ENCODE measurements at regions of chr11 and their contacts with region 1.

Region 1: GRCh38 chr11:8964324-8965320 is at the start of gene TMEM9B:
- DNase-seq: peak; percentile 50 to 87 (median 70)
- ATAC-seq: peak; percentile 72
- H3K4me3 ChIP-seq: peak within 1 kb of the TSS; percentile 98
- H3K4me3 Mint-ChIP-seq: peak within 1 kb of the TSS; percentile 97
- H3K27ac ChIP-seq: peak within 1 kb of the TSS; percentile 91 to 96
- H3K27ac Mint-ChIP-seq: peak within 1 kb of the TSS; percentile 97
- H3K4me1 ChIP-seq: peaks cover 28% of the 10 kb centered on the region
- H3K4me1 Mint-ChIP-seq: peaks cover 35% of the 10 kb centered on the region
- H3K27me3 ChIP-seq: no peaks in the 10 kb centered on the region
- H3K27me3 Mint-ChIP-seq: no peaks in the 10 kb centered on the region
- CTCF ChIP-seq: no peak
- total RNA-seq, gene TMEM9B: 20.5 to 22.1 TPM

Region 2: DNA sequence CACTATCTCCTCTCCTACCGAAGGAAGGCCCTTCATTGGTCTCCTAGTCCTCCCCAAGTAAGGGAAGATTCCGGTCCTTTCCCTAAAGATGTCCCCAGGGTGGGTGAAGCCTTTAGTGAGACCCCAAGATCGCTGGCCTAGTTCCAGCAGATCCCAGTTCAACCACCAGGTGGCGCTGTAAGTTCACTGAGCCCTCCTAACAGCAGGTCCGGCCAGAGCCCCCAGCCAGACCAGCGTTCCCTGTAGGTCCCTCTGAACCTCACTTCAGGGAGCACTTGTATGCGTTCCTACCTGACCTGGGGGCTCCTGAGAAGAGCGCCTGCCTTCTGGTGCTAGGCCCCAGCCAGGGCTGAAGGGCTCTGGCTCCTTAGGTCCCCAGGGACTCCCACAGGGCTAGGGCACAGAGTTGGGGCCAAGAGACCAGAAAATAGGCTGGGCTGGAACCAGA is 739.0 kb before region 1 on chr11:
- CTCF ChIA-PET with region 1: no interaction called
- POLR2A ChIA-PET with region 1: no interaction called
- intact Hi-C with region 1: loop called in 1 of 2 experiments (anchors 5 kb)
- DNase-seq: peak; percentile 44 to 76 (median 58)
- ATAC-seq: peak; percentile 37
- H3K4me3 ChIP-seq: no peak overlapping the region
- H3K4me3 Mint-ChIP-seq: no peak overlapping the region
- H3K27ac ChIP-seq: no peak overlapping the region
- H3K27ac Mint-ChIP-seq: no peak overlapping the region
- H3K4me1 ChIP-seq: no peaks in the 10 kb centered on the region
- H3K4me1 Mint-ChIP-seq: no peaks in the 10 kb centered on the region
- H3K27me3 ChIP-seq: no peaks in the 10 kb centered on the region
- H3K27me3 Mint-ChIP-seq: peaks cover 4% of the 10 kb centered on the region
- CTCF ChIP-seq: peak; percentile 91

Region 3: DNA sequence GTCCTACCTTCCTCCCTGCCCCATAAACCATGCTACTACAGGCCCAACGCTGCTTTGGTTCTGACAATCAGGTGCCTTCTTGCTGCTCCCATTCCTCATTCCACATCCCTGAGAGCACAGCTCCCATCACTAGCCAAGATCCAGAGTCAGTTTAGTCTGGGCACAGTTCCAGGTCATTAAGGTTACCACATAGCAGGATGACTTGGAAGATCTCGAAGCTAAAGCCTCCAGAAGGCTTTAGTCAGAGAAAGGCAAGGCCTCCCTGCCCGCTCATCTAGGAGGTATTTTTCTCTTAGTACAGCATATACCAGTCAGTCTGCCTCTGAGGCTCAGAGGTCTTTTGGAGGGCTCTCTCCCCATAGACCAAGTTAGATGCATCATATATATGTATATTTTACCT is 312.5 kb before region 1 on chr11:
- CTCF ChIA-PET with region 1: no interaction called
- POLR2A ChIA-PET with region 1: no interaction called
- intact Hi-C with region 1: no loop called
- DNase-seq: no peak
- ATAC-seq: no peak
- H3K4me3 ChIP-seq: no peak overlapping the region
- H3K4me3 Mint-ChIP-seq: no peak overlapping the region
- H3K27ac ChIP-seq: no peak overlapping the region
- H3K27ac Mint-ChIP-seq: no peak overlapping the region
- H3K4me1 ChIP-seq: no peaks in the 10 kb centered on the region
- H3K4me1 Mint-ChIP-seq: no peaks in the 10 kb centered on the region
- H3K27me3 ChIP-seq: no peaks in the 10 kb centered on the region
- H3K27me3 Mint-ChIP-seq: no peaks in the 10 kb centered on the region
- CTCF ChIP-seq: no peak

Region 4: GRCh38 chr11:8682303-8683114 is 282.1 kb before region 1 on chr11 and contains the starts of genes RPL27A and TRIM66:
- CTCF ChIA-PET with region 1: interaction called, 3 read pairs
- POLR2A ChIA-PET with region 1: interaction called, 18 read pairs
- intact Hi-C with region 1: loop called in 1 of 2 experiments (anchors 5 kb)
- DNase-seq: peak; percentile 97 to 100 (median 99)
- ATAC-seq: peak; percentile 94
- H3K4me3 ChIP-seq: peak within 1 kb of the TSS; percentile 93
- H3K4me3 Mint-ChIP-seq: peak within 1 kb of the TSS; percentile 99
- H3K27ac ChIP-seq: peak within 1 kb of the TSS; percentile 92 to 96
- H3K27ac Mint-ChIP-seq: peak within 1 kb of the TSS; percentile 99
- H3K4me1 ChIP-seq: peaks cover 29% of the 10 kb centered on the region
- H3K4me1 Mint-ChIP-seq: peaks cover 52% of the 10 kb centered on the region
- H3K27me3 ChIP-seq: no peaks in the 10 kb centered on the region
- H3K27me3 Mint-ChIP-seq: no peaks in the 10 kb centered on the region
- CTCF ChIP-seq: no peak
- total RNA-seq, gene RPL27A: 1,667 to 1,721 TPM
- total RNA-seq, gene TRIM66: 6.8 to 9.8 TPM

Region 5: GRCh38 chr11:8688414-8689362 is 275.9 kb before region 1 on chr11:
- CTCF ChIA-PET with region 1: interaction called, 3 read pairs
- POLR2A ChIA-PET with region 1: interaction called, 18 read pairs
- intact Hi-C with region 1: loop called in 1 of 2 experiments (anchors 5 kb)
- DNase-seq: peak; percentile 46 to 89 (median 77)
- ATAC-seq: peak; percentile 76
- H3K4me3 ChIP-seq: peak overlapping the region; percentile 73
- H3K4me3 Mint-ChIP-seq: peak overlapping the region; percentile 96
- H3K27ac ChIP-seq: peak overlapping the region; percentile 73 to 84
- H3K27ac Mint-ChIP-seq: peak overlapping the region; percentile 90
- H3K4me1 ChIP-seq: peaks cover 26% of the 10 kb centered on the region
- H3K4me1 Mint-ChIP-seq: peaks cover 43% of the 10 kb centered on the region
- H3K27me3 ChIP-seq: no peaks in the 10 kb centered on the region
- H3K27me3 Mint-ChIP-seq: no peaks in the 10 kb centered on the region
- CTCF ChIP-seq: no peak

Region 6: DNA sequence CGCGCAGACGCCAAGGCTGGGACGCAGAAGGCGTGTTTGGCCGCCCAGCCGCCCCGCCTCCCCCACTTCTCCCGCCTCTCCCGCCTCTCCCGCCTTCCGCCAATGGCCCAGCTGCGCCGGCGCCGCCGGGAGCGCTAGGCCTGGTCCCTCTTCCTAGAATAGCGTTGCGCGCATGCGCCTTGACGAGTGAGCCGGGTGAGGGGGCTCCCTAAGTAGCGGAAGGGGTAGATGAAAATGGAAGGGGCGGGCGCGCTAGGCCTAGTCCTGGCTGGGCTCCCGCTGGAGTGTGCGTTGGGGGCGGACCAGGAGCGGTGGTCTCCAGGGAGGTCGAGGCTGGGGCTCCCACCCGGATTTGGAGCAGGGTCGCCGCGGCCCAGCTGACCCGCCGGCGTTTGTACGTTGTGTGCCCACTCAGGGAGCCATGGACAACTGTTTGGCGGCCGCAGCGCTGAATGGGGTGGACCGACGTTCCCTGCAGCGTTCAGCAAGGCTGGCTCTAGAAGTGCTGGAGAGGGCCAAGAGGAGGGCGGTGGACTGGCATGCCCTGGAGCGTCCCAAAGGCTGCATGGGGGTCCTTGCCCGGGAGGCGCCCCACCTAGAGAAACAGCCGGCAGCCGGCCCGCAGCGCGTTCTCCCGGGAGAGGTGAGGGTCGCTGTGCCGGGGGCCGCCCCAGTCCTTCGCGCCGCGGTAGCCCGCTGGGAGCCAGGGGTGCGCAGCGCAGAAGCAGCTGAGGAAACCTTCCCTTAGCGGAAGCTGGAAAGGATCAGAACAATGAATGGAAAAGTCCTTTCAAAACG is 53.4 kb before region 1 on chr11 and contains the start of gene AKIP1:
- CTCF ChIA-PET with region 1: interaction called, 14 read pairs
- POLR2A ChIA-PET with region 1: interaction called, 9 read pairs
- intact Hi-C with region 1: loop called (anchors 1 to 2 kb)
- DNase-seq: peak; percentile 44 to 91 (median 74)
- ATAC-seq: peak; percentile 61
- H3K4me3 ChIP-seq: peak within 1 kb of the TSS; percentile 89
- H3K4me3 Mint-ChIP-seq: peak within 1 kb of the TSS; percentile 96
- H3K27ac ChIP-seq: peak within 1 kb of the TSS; percentile 41 to 55
- H3K27ac Mint-ChIP-seq: peak within 1 kb of the TSS; percentile 82
- H3K4me1 ChIP-seq: peaks cover 27% of the 10 kb centered on the region
- H3K4me1 Mint-ChIP-seq: peaks cover 47% of the 10 kb centered on the region
- H3K27me3 ChIP-seq: no peaks in the 10 kb centered on the region
- H3K27me3 Mint-ChIP-seq: no peaks in the 10 kb centered on the region
- CTCF ChIP-seq: no peak
- total RNA-seq, gene AKIP1: 3.2 to 4.1 TPM

Region 7: GRCh38 chr11:9003573-9004309 is 39.1 kb after region 1 on chr11 and contains the start of gene NRIP3:
- CTCF ChIA-PET with region 1: no interaction called
- POLR2A ChIA-PET with region 1: interaction called, 14 read pairs
- intact Hi-C with region 1: no loop called
- DNase-seq: peak; percentile 66 to 93 (median 76)
- ATAC-seq: peak; percentile 90
- H3K4me3 ChIP-seq: peak within 1 kb of the TSS; percentile 53
- H3K4me3 Mint-ChIP-seq: peak within 1 kb of the TSS; percentile 87
- H3K27ac ChIP-seq: no peak within 1 kb of the TSS
- H3K27ac Mint-ChIP-seq: peak within 1 kb of the TSS; percentile 25
- H3K4me1 ChIP-seq: peaks cover 23% of the 10 kb centered on the region
- H3K4me1 Mint-ChIP-seq: peaks cover 22% of the 10 kb centered on the region
- H3K27me3 ChIP-seq: peaks cover 11 to 40% of the 10 kb centered on the region in 2 experiments
- H3K27me3 Mint-ChIP-seq: peaks cover 51% of the 10 kb centered on the region
- CTCF ChIP-seq: no peak
- total RNA-seq, gene NRIP3: 4.6 to 4.9 TPM

Region 8: GRCh38 chr11:9384535-9385303 is 420.1 kb after region 1 on chr11 and contains the start of gene IPO7:
- CTCF ChIA-PET with region 1: interaction called, 3 read pairs
- POLR2A ChIA-PET with region 1: no interaction called
- intact Hi-C with region 1: loop called in 1 of 2 experiments (anchors 5 kb)
- DNase-seq: peak; percentile 72 to 93 (median 84)
- ATAC-seq: peak; percentile 98
- H3K4me3 ChIP-seq: peak within 1 kb of the TSS; percentile 82
- H3K4me3 Mint-ChIP-seq: peak within 1 kb of the TSS; percentile 96
- H3K27ac ChIP-seq: peak within 1 kb of the TSS; percentile 69 to 78
- H3K27ac Mint-ChIP-seq: peak within 1 kb of the TSS; percentile 80
- H3K4me1 ChIP-seq: peaks cover 29% of the 10 kb centered on the region
- H3K4me1 Mint-ChIP-seq: peaks cover 42% of the 10 kb centered on the region
- H3K27me3 ChIP-seq: no peaks in the 10 kb centered on the region
- H3K27me3 Mint-ChIP-seq: no peaks in the 10 kb centered on the region
- CTCF ChIP-seq: no peak
- total RNA-seq, gene IPO7: 40.7 to 51.6 TPM

Region 9: DNA sequence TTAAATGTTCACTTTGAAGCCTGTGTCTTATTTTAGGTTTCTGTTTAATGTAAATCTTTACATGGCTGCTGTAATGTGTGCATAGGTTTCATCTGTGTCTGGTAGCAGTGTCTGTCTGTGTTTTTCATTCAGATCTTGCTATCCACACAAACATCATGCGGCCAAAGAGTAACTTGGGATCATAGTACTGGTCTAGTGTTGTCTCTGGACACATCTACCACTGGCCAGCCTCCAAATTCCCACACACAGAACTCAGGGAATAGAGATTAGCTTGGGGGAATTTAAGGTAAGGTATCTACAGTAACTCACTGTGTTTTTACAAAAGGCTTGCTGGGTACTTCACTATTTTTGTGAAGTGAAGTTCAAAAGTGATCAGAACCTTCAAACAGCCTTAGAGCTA is 464.1 kb after region 1 on chr11:
- CTCF ChIA-PET with region 1: no interaction called
- POLR2A ChIA-PET with region 1: no interaction called
- intact Hi-C with region 1: no loop called
- DNase-seq: no peak
- ATAC-seq: no peak
- H3K4me3 ChIP-seq: no peak overlapping the region
- H3K4me3 Mint-ChIP-seq: no peak overlapping the region
- H3K27ac ChIP-seq: no peak overlapping the region
- H3K27ac Mint-ChIP-seq: no peak overlapping the region
- H3K4me1 ChIP-seq: no peaks in the 10 kb centered on the region
- H3K4me1 Mint-ChIP-seq: no peaks in the 10 kb centered on the region
- H3K27me3 ChIP-seq: no peaks in the 10 kb centered on the region
- H3K27me3 Mint-ChIP-seq: no peaks in the 10 kb centered on the region
- CTCF ChIP-seq: no peak

Measured in CD4-positive, alpha-beta T cell (primary cell).